ENCODE measurements at regions of chr11 and their contacts with region 1.

Region 1: GRCh38 chr11:20127671-20128527 is 32.4 kb downstream of the DBX1 start:
- DNase-seq: peak; percentile 59 to 94
- H3K4me3 ChIP-seq: no peak overlapping the region
- CTCF ChIP-seq: peak in 1 of 3 donors; percentile 40
- POLR2A ChIP-seq: no peak

Region 2: DNA sequence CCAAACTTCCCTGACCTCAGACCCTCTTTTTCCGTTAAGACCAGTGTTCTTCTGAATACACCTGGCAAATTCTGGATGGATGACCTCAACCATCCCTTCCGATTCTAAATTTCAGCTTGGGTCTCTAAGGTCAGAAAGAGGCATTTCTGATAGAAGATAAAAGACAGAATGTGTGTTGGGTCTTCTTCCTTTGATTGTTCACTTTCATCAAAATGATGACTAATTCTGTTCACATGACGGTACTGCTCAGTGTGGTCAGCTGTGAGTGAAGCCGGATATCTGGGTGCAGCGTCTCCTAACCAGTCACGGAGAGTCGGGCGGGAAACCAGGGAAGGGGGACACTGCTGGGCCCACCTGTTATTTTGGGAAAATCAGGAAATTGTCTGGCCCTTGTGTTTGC is 566.9 kb before region 1 on chr11:
- intact Hi-C with region 1: loop called (anchors 10 kb)
- DNase-seq: no peak
- H3K4me3 ChIP-seq: no peak overlapping the region
- CTCF ChIP-seq: no peak
- POLR2A ChIP-seq: no peak

Region 3: DNA sequence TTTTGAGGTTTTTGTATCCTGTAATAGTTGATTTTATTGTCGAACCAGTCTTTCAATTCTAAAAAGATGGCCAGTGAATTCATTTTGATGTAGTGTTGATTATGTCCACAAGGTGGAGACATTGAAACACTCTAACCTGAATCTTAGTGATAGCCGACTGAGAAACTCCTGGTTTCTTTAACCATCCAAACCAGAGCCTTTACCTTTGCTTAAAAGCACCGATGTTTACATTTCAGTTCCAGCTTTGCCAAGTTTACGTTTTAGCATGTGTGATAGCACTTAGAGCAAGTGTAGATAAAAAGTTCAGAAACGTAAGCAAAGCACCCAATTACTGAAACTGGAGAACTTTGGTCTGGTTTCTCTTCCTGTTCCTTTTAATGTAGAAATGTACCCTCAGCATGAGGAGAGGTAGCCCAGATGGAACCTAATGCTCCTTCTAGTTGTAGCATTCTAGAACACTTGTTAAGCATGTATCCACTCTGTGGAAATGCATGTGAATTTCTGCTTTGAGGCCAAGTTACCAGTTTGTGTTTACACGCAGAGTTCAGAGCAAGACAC is 176.3 kb before region 1 on chr11:
- intact Hi-C with region 1: loop called (anchors 5 kb)
- DNase-seq: no peak
- H3K4me3 ChIP-seq: no peak overlapping the region
- CTCF ChIP-seq: peak in 1 of 3 donors; percentile 19
- POLR2A ChIP-seq: no peak

Region 4: GRCh38 chr11:20355221-20356219 is 227.6 kb after region 1 on chr11:
- intact Hi-C with region 1: loop called (anchors 10 kb)
- DNase-seq: no peak
- H3K4me3 ChIP-seq: no peak overlapping the region
- CTCF ChIP-seq: no peak
- POLR2A ChIP-seq: no peak

Region 5: DNA sequence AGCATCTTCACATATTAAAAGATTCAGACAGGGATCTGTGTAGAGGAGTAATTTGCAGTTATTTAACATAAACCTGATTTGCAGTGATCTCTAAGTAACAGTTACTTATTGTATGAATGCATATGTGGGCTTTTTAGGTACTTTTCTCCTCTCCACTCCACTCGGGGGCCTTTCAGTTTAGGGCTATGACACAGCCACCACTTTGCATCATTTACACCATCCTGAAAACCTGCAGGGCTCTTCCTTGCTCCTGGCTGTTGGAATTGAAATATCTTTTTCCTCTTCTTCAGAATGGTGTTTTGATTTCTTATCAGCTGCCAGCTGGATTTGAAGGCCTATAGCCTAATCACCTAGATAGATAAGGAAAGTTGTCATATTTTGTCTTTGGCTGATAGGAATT is 1122.3 kb after region 1 on chr11:
- intact Hi-C with region 1: no loop called
- DNase-seq: no peak
- H3K4me3 ChIP-seq: no peak overlapping the region
- CTCF ChIP-seq: no peak
- POLR2A ChIP-seq: no peak